Transverse colon (tissue), 4 donors: ENCODE measurements at regions of chr14 and their contacts with region 1.

Region 1: GRCh38 chr14:69460093-69460701 is 24.3 kb upstream of the PLEKHD1 start:
- DNase-seq: peak; percentile 71
- H3K4me3 ChIP-seq: no peak overlapping the region
- H3K27ac ChIP-seq: no peak overlapping the region
- H3K4me1 ChIP-seq: no peaks in the 10 kb centered on the region
- H3K27me3 ChIP-seq: no peaks in the 10 kb centered on the region
- CTCF ChIP-seq: peak; percentile 70 to 89 (median 76)
- EP300 ChIP-seq: no peak
- POLR2A ChIP-seq: no peak

Region 2: DNA sequence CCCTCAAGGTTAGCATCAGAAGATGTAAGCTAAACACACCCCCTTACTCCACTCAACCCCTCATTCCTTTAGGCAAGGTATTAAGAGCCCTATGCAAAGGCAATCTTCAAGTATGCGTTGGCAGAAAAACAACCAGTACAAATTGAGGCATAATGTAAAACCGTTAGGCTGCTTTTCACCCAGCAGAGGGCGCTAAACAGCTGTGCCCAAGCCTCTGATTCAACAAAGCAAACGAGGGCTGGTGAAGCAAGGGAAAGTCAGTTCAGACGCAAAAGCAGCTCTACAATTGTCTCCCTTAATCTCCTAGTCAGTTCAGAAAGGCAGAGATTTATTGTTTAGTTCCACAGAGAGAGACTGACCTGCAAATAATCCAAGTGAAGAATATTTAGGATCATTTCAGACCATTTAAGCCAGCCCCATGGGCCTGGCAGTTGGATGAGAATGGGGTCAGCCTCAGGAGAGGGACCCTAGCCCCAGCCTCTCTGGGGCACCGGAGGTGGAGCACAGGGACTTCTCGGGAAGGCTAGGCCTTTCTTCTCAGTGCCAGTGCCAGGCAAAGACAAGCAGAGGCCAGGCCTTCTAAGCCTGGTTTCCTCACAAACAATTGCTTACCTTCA is 330.8 kb before region 1 on chr14:
- in situ Hi-C with region 1: loop called in 1 of 4 experiments (anchors 25 kb)
- intact Hi-C with region 1: no loop called
- DNase-seq: peak; percentile 70
- H3K4me3 ChIP-seq: no peak overlapping the region
- H3K27ac ChIP-seq: peak overlapping the region; percentile 45 to 68 (median 50)
- H3K4me1 ChIP-seq: peaks cover 6 to 52% (median 30%) of the 10 kb centered on the region in 4 donors
- H3K27me3 ChIP-seq: no peaks in the 10 kb centered on the region
- CTCF ChIP-seq: peak; percentile 84 to 92 (median 92)
- EP300 ChIP-seq: no peak
- POLR2A ChIP-seq: no peak

Region 3: DNA sequence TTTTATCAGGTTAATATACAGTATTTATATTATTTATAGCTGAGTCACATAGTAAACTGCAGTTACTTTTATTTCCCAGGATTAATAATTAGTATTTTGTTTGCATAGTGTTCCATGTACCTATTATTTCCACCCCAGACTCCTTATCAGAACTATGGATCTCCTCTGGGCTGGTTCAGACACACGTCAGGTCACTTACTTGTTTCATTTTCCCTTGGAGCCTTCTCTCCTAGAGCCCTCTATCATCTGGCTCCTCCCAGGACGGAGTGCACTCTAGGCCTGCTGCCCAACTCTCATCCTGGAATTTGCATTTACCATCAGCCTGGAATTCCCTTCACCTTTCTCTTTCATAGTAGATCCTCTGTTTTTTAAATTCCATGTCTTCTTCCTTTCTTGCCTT is 228.7 kb before region 1 on chr14:
- in situ Hi-C with region 1: loop called in 3 of 4 experiments (anchors 10 to 25 kb)
- intact Hi-C with region 1: no loop called
- DNase-seq: no peak
- H3K4me3 ChIP-seq: no peak overlapping the region
- H3K27ac ChIP-seq: no peak overlapping the region
- H3K4me1 ChIP-seq: no peaks in the 10 kb centered on the region
- H3K27me3 ChIP-seq: no peaks in the 10 kb centered on the region
- CTCF ChIP-seq: no peak
- EP300 ChIP-seq: no peak
- POLR2A ChIP-seq: no peak

Region 4: DNA sequence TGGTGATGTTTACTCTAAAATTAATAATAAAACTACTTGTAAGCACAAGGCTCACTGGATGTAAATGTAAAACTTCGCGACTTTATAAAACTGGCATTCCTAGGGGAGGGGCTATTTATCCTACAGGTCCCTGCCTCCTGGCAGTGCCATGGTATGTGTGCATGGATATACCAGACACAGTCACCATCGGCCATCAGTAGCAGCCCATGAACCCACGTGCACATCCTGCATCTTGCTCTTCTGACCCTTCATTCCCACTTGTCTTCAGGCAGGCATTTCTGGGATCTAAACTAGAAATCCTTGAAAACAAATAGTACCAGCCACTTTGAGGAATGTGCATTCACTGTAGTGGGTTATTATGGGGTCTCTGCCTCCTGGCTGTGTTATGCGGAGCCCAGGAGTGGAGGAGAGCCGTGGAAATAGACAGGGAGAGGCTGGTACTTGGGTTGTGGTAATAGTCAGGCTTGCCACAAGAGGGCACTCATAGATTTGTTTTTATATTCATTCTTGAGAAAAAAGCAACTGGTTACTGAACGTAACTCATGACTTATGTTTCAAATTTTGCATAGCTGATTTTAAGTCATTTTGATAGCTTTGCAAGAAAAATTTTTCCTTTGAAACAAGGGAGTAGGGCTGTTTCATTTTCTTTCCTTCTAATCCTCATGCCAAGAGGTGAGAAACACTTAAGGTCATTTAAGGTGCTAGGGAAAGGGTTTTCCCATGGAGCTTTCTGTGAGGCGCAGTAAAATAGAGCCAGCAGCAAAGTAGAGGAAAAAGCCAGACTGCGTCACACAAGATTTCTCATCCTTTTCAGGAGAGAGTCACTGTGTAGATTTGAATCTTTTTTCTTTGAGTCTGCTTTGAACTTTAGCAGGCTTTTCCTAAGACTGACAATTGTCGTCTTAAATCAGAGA is 217.6 kb before region 1 on chr14:
- in situ Hi-C with region 1: loop called in 3 of 4 experiments (anchors 10 to 25 kb)
- intact Hi-C with region 1: no loop called
- DNase-seq: peak; percentile 50
- H3K4me3 ChIP-seq: no peak overlapping the region
- H3K27ac ChIP-seq: peak overlapping the region in 2 of 4 donors; percentile 36 to 46
- H3K4me1 ChIP-seq: peaks cover 0 to 17% (median 4%) of the 10 kb centered on the region in 4 donors
- H3K27me3 ChIP-seq: no peaks in the 10 kb centered on the region
- CTCF ChIP-seq: peak; percentile 70 to 88 (median 78)
- EP300 ChIP-seq: no peak
- POLR2A ChIP-seq: no peak

Region 5: GRCh38 chr14:69259527-69260189 is 200.5 kb before region 1 on chr14 and contains the start of gene GALNT16:
- in situ Hi-C with region 1: loop called in 1 of 4 experiments (anchors 10 kb)
- intact Hi-C with region 1: no loop called
- DNase-seq: peak; percentile 25
- H3K4me3 ChIP-seq: peak within 1 kb of the TSS; percentile 36 to 57 (median 46)
- H3K27ac ChIP-seq: peak within 1 kb of the TSS; percentile 21 to 31 (median 24)
- H3K4me1 ChIP-seq: peaks cover 6 to 32% (median 26%) of the 10 kb centered on the region in 4 donors
- H3K27me3 ChIP-seq: peaks cover 76% of the 10 kb centered on the region
- CTCF ChIP-seq: peak in 4 of 5 experiments; percentile 18 to 29 (median 24)
- EP300 ChIP-seq: no peak
- POLR2A ChIP-seq: no peak
- total RNA-seq, gene GALNT16: 2.5 to 11.3 (median 2.8) TPM

Region 6: GRCh38 chr14:69574263-69574953 is 114.2 kb after region 1 on chr14 and contains the start of gene CCDC177:
- in situ Hi-C with region 1: no loop called
- intact Hi-C with region 1: no loop called
- DNase-seq: peak; percentile 68
- H3K4me3 ChIP-seq: peak within 1 kb of the TSS in 1 of 4 donors; percentile 53
- H3K27ac ChIP-seq: no peak within 1 kb of the TSS
- H3K4me1 ChIP-seq: peaks cover 9 to 36% (median 28%) of the 10 kb centered on the region in 4 donors
- H3K27me3 ChIP-seq: peaks cover 81% of the 10 kb centered on the region
- CTCF ChIP-seq: peak; percentile 76 to 89 (median 82)
- EP300 ChIP-seq: no peak
- POLR2A ChIP-seq: no peak
- total RNA-seq, gene CCDC177: not detected

Region 7: DNA sequence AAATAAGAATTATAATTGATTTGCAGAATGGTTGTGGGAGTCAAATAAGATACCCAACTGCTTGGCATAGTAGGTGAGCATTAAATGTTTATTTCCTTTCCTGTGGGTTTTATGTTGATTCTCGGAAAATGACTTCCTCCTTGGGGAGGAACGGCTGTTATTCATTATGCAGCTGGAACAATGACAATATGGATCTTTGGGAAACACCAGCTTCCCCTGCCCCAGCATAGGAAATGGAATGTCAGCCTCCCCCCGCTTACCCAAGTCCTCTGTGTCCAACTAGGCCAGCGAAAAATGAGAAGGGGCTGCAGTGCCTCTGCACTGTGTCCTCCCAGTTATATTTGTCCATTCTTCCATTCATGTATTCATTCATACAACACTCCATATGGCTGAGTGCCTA is 126.2 kb after region 1 on chr14:
- in situ Hi-C with region 1: no loop called
- intact Hi-C with region 1: no loop called
- DNase-seq: no peak
- H3K4me3 ChIP-seq: no peak overlapping the region
- H3K27ac ChIP-seq: peak overlapping the region in 3 of 4 donors; percentile 14 to 41 (median 33)
- H3K4me1 ChIP-seq: peaks cover 0 to 13% (median 5%) of the 10 kb centered on the region in 4 donors
- H3K27me3 ChIP-seq: no peaks in the 10 kb centered on the region
- CTCF ChIP-seq: no peak
- EP300 ChIP-seq: no peak
- POLR2A ChIP-seq: no peak